Activated CD8-positive, alpha-beta T cell treated with anti-CD3 and anti-CD28 coated beads, Interleukin-2, amount 10 ng/mL, durations not matched to agents 7 days and 5 days (primary cell): ENCODE measurements at regions of chr6 and their contacts with region 1.

Region 1: DNA sequence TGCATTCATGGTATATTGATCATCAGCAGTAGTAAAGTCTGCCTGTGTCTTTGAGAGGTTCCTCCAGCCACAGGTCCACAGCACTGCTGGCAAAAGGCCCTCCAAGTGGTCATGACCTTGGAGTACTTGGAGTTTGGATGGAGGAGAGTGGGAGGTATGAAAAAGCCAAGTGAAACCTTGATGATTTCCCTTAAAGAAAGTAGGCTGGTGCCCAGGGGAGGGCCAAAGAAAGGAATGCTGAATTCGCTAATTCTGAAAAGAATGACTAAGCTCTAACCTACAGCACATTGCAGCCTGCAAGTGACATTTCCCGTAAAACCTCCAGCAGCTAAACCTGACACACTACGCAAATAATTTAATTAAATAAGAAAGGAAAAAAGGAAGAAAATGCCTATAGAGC is 223.4 kb upstream of the TAB2 start:
- DNase-seq: no peak
- ATAC-seq: no peak
- H3K4me3 Mint-ChIP-seq: peak overlapping the region; percentile 54
- H3K27ac Mint-ChIP-seq: peak overlapping the region; percentile 89
- H3K4me1 Mint-ChIP-seq: peaks cover 79% of the 10 kb centered on the region
- H3K27me3 Mint-ChIP-seq: no peaks in the 10 kb centered on the region

Region 2: GRCh38 chr6:149129371-149130077 is 35.4 kb after region 1 on chr6:
- CTCF ChIA-PET with region 1: interaction called, 27 read pairs
- POLR2A ChIA-PET with region 1: interaction called, 28 read pairs
- DNase-seq: peak; percentile 20
- ATAC-seq: no peak
- H3K4me3 Mint-ChIP-seq: no peak overlapping the region
- H3K27ac Mint-ChIP-seq: peak overlapping the region; percentile 83
- H3K4me1 Mint-ChIP-seq: peaks cover 61% of the 10 kb centered on the region
- H3K27me3 Mint-ChIP-seq: no peaks in the 10 kb centered on the region